Astrocyte of the cerebellum (primary cell): ENCODE measurements at regions of chr6 and their contacts with region 1.

Region 1: DNA sequence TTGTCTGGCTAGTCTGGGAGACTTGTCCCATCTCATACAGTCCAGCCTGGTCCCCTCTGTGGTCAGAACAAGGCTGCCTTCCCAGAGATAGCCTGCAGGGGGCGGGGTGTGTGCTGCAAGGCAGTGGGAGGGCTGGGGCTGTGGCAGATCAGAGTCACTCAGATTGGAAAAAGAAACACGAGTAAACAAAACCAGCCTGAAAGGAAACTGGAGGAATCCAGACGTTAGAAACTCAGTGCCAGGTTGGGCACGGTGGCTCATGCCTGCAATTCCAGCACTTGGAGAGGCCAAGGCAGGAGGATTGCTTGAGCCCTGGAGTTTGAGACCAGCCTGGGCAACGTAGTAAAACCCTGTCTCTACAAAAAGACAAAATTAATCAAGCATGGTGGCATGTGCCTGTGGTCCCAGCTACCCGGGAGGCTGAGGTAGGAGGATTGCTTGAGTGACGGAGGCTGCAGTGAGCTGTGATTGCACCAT is 20.2 kb downstream of the LEMD2 start:
- DNase-seq: peak; percentile 49
- H3K4me3 ChIP-seq: no peak overlapping the region
- CTCF ChIP-seq: peak; percentile 85

Region 2: DNA sequence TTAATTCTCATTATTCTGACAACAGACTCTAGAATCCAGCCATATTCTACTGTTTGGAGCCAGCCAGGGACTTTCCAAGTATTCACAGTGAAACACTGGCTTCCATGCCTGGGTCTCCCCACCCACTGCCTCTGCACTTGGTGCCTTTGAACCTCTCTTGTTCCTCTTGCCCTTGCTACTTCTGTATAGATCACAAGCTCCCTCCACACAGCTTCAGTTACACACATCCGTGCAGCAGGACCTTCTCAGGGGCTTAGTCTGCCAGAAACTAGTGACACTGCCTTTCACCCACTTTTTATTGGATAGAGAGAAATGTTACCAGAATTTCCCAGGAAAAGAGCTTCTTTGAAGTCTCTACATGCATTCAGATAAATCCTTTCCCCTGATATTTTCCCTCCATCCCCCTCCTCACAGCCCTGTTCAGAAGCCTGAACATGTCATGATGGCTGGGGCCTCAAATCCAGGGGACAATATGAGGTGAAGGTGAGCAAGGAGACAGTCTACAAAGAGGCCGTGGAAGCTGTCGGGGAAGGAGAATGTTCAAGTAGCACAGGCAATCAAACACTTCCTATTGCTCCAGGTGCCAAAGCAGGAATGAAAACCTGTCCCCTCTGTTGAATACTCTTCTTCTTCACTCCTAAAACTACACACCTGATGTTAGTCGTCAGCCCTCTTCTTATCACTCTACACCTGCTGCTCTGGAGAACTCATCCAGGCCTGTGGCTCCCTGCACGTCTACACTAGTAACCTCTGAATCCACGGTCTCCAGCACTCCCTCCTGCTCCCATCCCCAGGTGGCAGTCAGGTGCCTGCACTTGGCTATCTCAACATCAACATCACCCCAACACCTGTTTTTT is 739.1 kb before region 1 on chr6:
- in situ Hi-C with region 1: no loop called
- DNase-seq: no peak
- H3K4me3 ChIP-seq: no peak overlapping the region
- CTCF ChIP-seq: no peak

Region 3: GRCh38 chr6:33579828-33580714 is 188.6 kb before region 1 on chr6 and contains the start of gene BAK1:
- in situ Hi-C with region 1: loop called (anchors 10 kb)
- DNase-seq: peak; percentile 66
- H3K4me3 ChIP-seq: peak within 1 kb of the TSS; percentile 62
- CTCF ChIP-seq: peak; percentile 61

Region 4: DNA sequence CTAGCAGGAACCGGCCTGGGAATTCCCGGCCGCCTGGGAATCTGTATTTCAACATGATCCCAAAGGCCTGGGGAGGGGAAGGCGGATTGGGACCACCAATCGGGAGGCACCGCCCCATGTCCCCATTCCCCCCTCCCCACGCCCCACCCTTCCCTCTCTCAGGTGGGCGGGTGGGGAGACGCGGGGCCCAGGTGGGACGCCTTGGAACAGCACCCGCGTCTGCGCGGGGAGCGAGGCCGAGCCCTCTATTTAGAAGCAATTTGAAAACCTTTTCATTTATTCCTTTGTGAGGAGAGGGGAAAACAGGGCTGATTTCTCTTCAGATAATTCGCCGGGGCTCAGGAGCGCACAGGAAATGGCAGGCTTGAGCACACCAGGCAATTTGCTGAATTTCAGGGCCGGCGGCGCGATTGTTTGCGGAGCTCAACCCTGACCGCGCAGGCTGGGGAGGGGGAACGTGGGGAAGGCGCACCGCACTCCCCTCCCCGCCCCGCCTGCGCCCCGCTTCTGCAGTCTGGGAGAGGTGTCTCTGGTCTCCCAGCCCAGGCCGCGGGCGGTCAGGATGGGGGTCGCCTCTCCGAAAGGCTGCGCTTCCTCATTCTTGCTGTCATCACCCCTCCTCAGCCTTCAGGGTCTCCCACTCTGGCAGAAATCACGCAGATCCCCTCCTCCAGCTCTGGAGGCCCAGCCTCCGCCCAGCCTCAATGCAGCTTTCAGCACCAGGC is 207.1 kb after region 1 on chr6:
- in situ Hi-C with region 1: no loop called
- DNase-seq: no peak
- H3K4me3 ChIP-seq: no peak overlapping the region
- CTCF ChIP-seq: no peak